ENCODE measurements at regions of chr7 and their contacts with region 1.

Region 1: GRCh38 chr7:26151953-26152781 is at the start of gene NFE2L3:
- DNase-seq: peak; percentile 83 to 92 (median 92)
- H3K4me3 ChIP-seq: peak within 1 kb of the TSS; percentile 69 to 92 (median 80)
- H3K27ac ChIP-seq: peak within 1 kb of the TSS in 1 of 2 experiments; percentile 79
- H3K4me1 ChIP-seq: peaks cover 4 to 50% (median 46%) of the 10 kb centered on the region in 4 experiments
- H3K27me3 ChIP-seq: no peaks in the 10 kb centered on the region

Region 2: GRCh38 chr7:26090927-26091519 is 61.1 kb before region 1 on chr7:
- CTCF ChIA-PET with region 1: interaction called, 10 read pairs
- POLR2A ChIA-PET with region 1: interaction called, 3 read pairs
- DNase-seq: peak; percentile 75 to 78 (median 77)
- H3K4me3 ChIP-seq: peak overlapping the region in 5 of 7 experiments; percentile 11 to 69 (median 33)
- H3K27ac ChIP-seq: peak overlapping the region in 1 of 2 experiments; percentile 44
- H3K4me1 ChIP-seq: peaks cover 0 to 16% (median 6%) of the 10 kb centered on the region in 4 experiments
- H3K27me3 ChIP-seq: no peaks in the 10 kb centered on the region

Region 3: GRCh38 chr7:26131056-26131589 is 21.0 kb before region 1 on chr7:
- CTCF ChIA-PET with region 1: interaction called, 13 read pairs
- POLR2A ChIA-PET with region 1: interaction called, 3 read pairs
- DNase-seq: no peak
- H3K4me3 ChIP-seq: no peak overlapping the region
- H3K27ac ChIP-seq: no peak overlapping the region
- H3K4me1 ChIP-seq: no peaks in the 10 kb centered on the region
- H3K27me3 ChIP-seq: peaks cover 0 to 2% (median 0%) of the 10 kb centered on the region in 5 experiments

Region 4: GRCh38 chr7:26187380-26188205 is 35.4 kb after region 1 on chr7:
- CTCF ChIA-PET with region 1: interaction called, 24 read pairs
- POLR2A ChIA-PET with region 1: interaction called, 36 read pairs
- DNase-seq: peak in 2 of 3 donors; percentile 53 to 60
- H3K4me3 ChIP-seq: no peak overlapping the region
- H3K27ac ChIP-seq: peak overlapping the region in 1 of 2 experiments; percentile 14
- H3K4me1 ChIP-seq: peaks cover 2 to 8% (median 2%) of the 10 kb centered on the region in 4 experiments
- H3K27me3 ChIP-seq: no peaks in the 10 kb centered on the region

Region 5: DNA sequence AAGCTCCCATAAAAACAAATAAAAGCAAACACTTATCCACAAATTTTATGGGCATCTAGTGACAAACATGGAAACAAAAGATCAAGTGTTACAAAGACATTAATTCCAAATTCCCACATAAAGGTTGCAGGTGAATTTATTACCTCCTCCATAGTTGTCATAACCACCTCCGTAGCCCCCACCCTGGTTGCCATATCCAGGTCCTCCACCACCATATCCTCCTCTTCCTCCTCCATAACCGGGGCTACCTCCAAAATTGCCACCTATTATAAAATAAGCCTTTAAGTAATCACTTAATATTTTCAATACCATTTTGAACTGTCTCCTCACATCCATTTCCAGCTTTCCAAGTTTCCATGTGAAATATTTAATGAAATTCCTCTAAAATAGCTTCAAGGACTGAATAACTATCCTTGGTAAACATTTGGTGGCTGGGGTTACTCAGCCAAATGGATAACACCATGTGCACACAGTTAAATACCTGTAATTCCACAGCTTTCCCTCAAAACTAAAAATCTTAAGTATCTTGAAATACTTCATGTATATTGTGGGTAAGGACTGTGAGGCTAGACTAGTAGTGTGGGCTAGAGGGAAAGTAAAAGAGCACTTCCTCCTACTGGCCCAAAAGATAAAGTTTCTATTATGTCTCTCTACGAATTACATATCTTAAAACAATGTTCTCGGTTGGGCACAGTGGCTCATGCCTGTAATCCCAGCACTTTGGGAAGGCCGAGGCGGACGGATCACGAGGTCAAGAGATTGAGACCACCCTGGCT is 41.5 kb after region 1 on chr7:
- CTCF ChIA-PET with region 1: interaction called, 24 read pairs
- POLR2A ChIA-PET with region 1: interaction called, 36 read pairs
- DNase-seq: peak in 2 of 3 donors; percentile 49 to 54
- H3K4me3 ChIP-seq: no peak overlapping the region
- H3K27ac ChIP-seq: no peak overlapping the region
- H3K4me1 ChIP-seq: peaks cover 36 to 58% (median 45%) of the 10 kb centered on the region in 4 experiments
- H3K27me3 ChIP-seq: no peaks in the 10 kb centered on the region

Region 6: DNA sequence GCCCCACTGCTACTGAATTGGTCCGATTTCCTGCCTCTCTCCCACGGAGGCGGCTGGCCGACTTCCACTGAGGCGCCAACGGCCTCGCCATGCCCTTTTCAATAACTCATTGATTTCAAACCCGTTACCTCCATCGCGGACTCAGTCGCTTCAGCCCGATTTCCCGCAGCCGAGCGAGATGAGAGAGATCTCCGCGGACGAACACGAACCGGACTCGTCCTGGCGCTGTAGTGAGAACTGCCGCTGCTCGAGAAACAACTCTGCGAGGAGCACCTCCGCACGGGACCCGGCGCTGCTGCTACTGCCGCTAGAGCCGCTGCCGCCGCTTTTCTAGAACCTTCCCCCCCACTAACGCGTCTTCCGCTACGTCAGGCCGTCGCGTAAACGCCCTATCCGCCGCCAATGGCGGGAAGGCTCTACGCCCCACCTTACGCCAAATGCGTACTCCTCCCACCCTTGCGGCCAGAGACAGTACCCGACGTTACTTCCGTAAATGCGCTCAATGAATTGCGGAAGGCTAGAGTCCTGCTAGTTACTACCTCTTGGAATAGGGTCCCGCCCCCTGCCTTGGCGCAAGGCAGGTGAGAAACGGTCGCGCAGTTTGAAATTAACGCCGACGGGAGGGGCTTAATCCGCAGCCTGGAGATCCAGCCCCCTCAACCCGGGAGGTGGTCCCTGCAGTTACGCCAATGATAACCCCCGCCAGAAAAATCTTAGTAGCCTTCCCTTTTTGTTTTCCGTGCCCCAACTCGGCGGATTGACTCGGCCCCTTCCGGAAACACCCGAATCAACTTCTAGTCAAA is 48.5 kb after region 1 on chr7 and contains the start of gene HNRNPA2B1:
- CTCF ChIA-PET with region 1: interaction called, 19 read pairs
- POLR2A ChIA-PET with region 1: interaction called, 11 read pairs
- DNase-seq: peak; percentile 99 to 100 (median 100)
- H3K4me3 ChIP-seq: peak within 1 kb of the TSS; percentile 95 to 100 (median 99)
- H3K27ac ChIP-seq: peak within 1 kb of the TSS; percentile 98 to 99
- H3K4me1 ChIP-seq: peaks cover 36 to 55% (median 50%) of the 10 kb centered on the region in 4 experiments
- H3K27me3 ChIP-seq: no peaks in the 10 kb centered on the region

Measured in common myeloid progenitor, CD34-positive (primary cell).